ENCODE measurements at regions of chr2 and their contacts with region 1.

Region 1: GRCh38 chr2:197889041-197889440 is 84.6 kb downstream of the PLCL1 start:
- DNase-seq: peak; percentile 58
- H3K4me3 Mint-ChIP-seq: no peak overlapping the region
- H3K27ac Mint-ChIP-seq: peak overlapping the region; percentile 79
- H3K4me1 Mint-ChIP-seq: peaks cover 36% of the 10 kb centered on the region
- H3K27me3 Mint-ChIP-seq: no peaks in the 10 kb centered on the region

Region 2: DNA sequence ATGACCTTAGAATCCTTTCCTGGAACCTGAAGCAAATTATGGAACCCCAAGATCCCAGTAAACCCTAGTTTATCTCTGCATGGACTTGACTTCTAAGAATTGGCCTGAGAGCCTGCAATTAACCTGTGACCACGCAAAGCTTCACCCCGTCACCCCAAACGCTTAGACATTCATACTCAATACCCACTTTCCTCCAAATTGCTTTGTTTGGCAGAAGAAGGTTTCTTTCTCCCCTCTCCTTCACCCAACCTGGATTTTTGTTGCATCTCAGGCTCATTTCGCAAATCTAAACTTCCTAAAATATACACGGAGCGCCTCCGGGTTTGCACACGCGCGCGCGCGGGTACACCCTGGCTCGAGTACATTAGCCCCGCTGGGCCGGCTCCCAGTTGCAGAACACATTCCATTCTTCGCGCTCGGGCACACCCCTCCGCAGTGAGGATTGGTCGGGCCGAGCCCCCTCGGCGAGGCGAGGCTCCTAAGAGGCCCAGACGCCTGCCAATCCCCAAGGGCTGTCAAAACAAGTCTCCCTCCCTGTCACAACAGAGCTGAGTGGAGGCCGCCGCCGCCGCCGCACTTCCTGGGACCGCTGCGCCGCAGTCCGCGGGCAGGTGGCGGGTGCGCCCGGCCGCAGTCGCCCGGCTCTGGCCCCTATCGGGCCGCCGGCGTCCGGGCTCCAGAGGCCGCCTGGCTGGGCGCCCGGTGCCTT is 84.8 kb before region 1 on chr2 and contains the start of gene PLCL1:
- CTCF ChIA-PET with region 1: no interaction called
- POLR2A ChIA-PET with region 1: no interaction called
- intact Hi-C with region 1: loop called (anchors 2 kb)
- DNase-seq: peak; percentile 95
- H3K4me3 Mint-ChIP-seq: peak within 1 kb of the TSS; percentile 90
- H3K27ac Mint-ChIP-seq: peak within 1 kb of the TSS; percentile 67
- H3K4me1 Mint-ChIP-seq: peaks cover 38% of the 10 kb centered on the region
- H3K27me3 Mint-ChIP-seq: peaks cover 4% of the 10 kb centered on the region
- total RNA-seq, gene PLCL1: 1.7 to 1.9 TPM

Region 3: DNA sequence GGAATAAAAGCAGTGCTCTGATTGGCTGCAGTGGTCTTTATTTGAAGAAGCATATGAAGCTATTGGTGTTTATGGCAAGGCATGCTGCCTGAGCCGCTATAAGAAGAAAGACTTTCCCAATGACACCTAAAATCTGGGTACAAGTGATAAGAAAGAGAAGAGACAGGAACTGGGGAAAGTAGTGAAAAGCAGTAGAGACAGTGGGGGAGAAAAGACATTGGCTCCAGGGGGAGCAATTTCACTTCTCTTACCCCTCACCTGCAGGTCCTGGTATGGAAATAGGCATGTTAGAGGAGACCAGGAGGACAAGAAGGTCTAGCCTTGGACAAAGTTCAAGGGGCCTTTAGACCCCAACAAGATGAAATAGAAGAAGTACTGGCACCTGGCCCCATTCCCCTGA is 37.6 kb before region 1 on chr2:
- CTCF ChIA-PET with region 1: no interaction called
- POLR2A ChIA-PET with region 1: no interaction called
- intact Hi-C with region 1: loop called (anchors 2 kb)
- DNase-seq: no peak
- H3K4me3 Mint-ChIP-seq: no peak overlapping the region
- H3K27ac Mint-ChIP-seq: no peak overlapping the region
- H3K4me1 Mint-ChIP-seq: peaks cover 56% of the 10 kb centered on the region
- H3K27me3 Mint-ChIP-seq: no peaks in the 10 kb centered on the region

Region 4: GRCh38 chr2:197904446-197904845 is 15.4 kb after region 1 on chr2:
- CTCF ChIA-PET with region 1: no interaction called
- POLR2A ChIA-PET with region 1: no interaction called
- intact Hi-C with region 1: loop called (anchors 2 kb)
- DNase-seq: peak; percentile 45
- H3K4me3 Mint-ChIP-seq: no peak overlapping the region
- H3K27ac Mint-ChIP-seq: no peak overlapping the region
- H3K4me1 Mint-ChIP-seq: peaks cover 20% of the 10 kb centered on the region
- H3K27me3 Mint-ChIP-seq: peaks cover 7% of the 10 kb centered on the region

Region 5: GRCh38 chr2:197952540-197953202 is 63.6 kb after region 1 on chr2:
- CTCF ChIA-PET with region 1: no interaction called
- POLR2A ChIA-PET with region 1: no interaction called
- intact Hi-C with region 1: loop called (anchors 5 kb)
- DNase-seq: peak; percentile 37
- H3K4me3 Mint-ChIP-seq: no peak overlapping the region
- H3K27ac Mint-ChIP-seq: no peak overlapping the region
- H3K4me1 Mint-ChIP-seq: peaks cover 46% of the 10 kb centered on the region
- H3K27me3 Mint-ChIP-seq: no peaks in the 10 kb centered on the region

Region 6: DNA sequence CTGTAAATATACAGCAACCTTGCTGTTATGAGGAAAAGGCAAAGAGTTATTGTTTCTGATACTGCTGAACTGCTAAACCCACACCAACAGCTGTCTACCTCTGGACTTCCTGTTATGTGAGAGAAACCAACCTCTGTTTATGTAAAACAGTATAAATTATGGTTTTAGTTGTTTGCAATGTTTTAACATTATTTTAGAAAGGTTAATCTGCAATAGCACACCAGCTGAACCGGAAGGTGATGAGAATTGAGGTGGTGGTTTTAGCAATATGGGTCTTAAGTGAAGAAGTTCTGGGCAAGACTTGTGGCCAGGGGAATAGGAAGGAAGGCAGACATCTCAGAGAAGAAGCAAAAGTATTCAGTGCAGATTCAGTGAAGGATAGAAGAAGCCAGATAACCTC is 153.1 kb after region 1 on chr2:
- CTCF ChIA-PET with region 1: interaction called, 4 read pairs
- POLR2A ChIA-PET with region 1: no interaction called
- intact Hi-C with region 1: loop called (anchors 1 kb)
- DNase-seq: no peak
- H3K4me3 Mint-ChIP-seq: no peak overlapping the region
- H3K27ac Mint-ChIP-seq: no peak overlapping the region
- H3K4me1 Mint-ChIP-seq: peaks cover 24% of the 10 kb centered on the region
- H3K27me3 Mint-ChIP-seq: no peaks in the 10 kb centered on the region

Measured in activated CD4-positive, alpha-beta memory T cell treated with anti-CD3 and anti-CD28 coated beads for 36 hours (primary cell).